PC-9 (cell line): ENCODE measurements at regions of chr14 and their contacts with region 1.

Region 1: GRCh38 chr14:75625034-75625433 is 35.6 kb downstream of the ERG28 start:
- DNase-seq: no peak
- H3K4me3 ChIP-seq: no peak overlapping the region
- H3K27ac ChIP-seq: no peak overlapping the region
- H3K4me1 ChIP-seq: no peaks in the 10 kb centered on the region
- H3K27me3 ChIP-seq: no peaks in the 10 kb centered on the region
- CTCF ChIP-seq: no peak

Region 2: DNA sequence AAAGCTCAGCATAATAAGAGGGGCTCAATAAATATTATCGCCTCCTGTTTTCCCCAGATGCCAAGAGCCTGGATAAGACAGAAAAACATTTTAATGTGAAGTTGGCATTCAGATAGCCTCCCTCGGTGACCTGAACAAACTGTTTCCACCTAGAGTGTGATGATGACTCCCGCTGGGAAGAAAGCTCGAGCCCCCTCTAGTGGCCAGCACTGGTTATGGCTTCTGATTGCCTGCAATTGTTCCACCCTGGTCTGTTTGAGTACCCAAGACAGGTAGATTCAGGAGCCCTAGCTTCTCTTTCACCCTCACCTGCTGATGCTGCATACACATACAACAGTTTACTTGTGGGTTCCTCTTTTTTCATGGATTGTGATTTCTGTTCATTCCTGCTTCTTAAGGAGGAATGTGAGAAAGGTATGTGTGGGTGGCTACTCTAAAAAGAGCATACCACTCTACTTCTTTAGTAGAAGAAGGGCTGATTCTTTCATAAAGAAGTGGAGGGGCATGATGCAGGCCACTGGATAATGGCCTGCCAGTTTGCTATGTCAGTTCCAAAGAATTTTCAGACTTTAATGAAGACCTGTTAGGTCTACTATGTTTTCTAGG is 29.2 kb after region 1 on chr14:
- CTCF ChIA-PET with region 1: interaction called, 12 read pairs
- POLR2A ChIA-PET with region 1: no interaction called
- intact Hi-C with region 1: no loop called
- DNase-seq: peak; percentile 58 to 81
- H3K4me3 ChIP-seq: no peak overlapping the region
- H3K27ac ChIP-seq: no peak overlapping the region
- H3K4me1 ChIP-seq: peaks cover 6% of the 10 kb centered on the region
- H3K27me3 ChIP-seq: no peaks in the 10 kb centered on the region
- CTCF ChIP-seq: peak; percentile 95